CD8-positive, alpha-beta T cell (primary cell): ENCODE measurements at regions of chr3 and their contacts with region 1.

Region 1: GRCh38 chr3:25633919-25634318 is 30.8 kb downstream of the TOP2B start:
- DNase-seq: no peak
- ATAC-seq: no peak
- H3K4me3 ChIP-seq: no peak overlapping the region
- H3K4me3 Mint-ChIP-seq: no peak overlapping the region
- H3K27ac ChIP-seq: no peak overlapping the region
- H3K27ac Mint-ChIP-seq: peak overlapping the region; percentile 62
- H3K4me1 ChIP-seq: no peaks in the 10 kb centered on the region
- H3K4me1 Mint-ChIP-seq: peaks cover 14% of the 10 kb centered on the region
- H3K27me3 ChIP-seq: no peaks in the 10 kb centered on the region
- H3K27me3 Mint-ChIP-seq: no peaks in the 10 kb centered on the region
- CTCF ChIP-seq: no peak

Region 2: GRCh38 chr3:25604107-25604805 is 29.7 kb before region 1 on chr3:
- CTCF ChIA-PET with region 1: no interaction called
- POLR2A ChIA-PET with region 1: no interaction called
- intact Hi-C with region 1: loop called in 1 of 2 experiments (anchors 5 kb)
- DNase-seq: peak in 1 of 9 experiments; percentile 15
- ATAC-seq: no peak
- H3K4me3 ChIP-seq: no peak overlapping the region
- H3K4me3 Mint-ChIP-seq: no peak overlapping the region
- H3K27ac ChIP-seq: no peak overlapping the region
- H3K27ac Mint-ChIP-seq: peak overlapping the region; percentile 32
- H3K4me1 ChIP-seq: no peaks in the 10 kb centered on the region
- H3K4me1 Mint-ChIP-seq: peaks cover 2% of the 10 kb centered on the region
- H3K27me3 ChIP-seq: no peaks in the 10 kb centered on the region
- H3K27me3 Mint-ChIP-seq: no peaks in the 10 kb centered on the region
- CTCF ChIP-seq: no peak

Region 3: DNA sequence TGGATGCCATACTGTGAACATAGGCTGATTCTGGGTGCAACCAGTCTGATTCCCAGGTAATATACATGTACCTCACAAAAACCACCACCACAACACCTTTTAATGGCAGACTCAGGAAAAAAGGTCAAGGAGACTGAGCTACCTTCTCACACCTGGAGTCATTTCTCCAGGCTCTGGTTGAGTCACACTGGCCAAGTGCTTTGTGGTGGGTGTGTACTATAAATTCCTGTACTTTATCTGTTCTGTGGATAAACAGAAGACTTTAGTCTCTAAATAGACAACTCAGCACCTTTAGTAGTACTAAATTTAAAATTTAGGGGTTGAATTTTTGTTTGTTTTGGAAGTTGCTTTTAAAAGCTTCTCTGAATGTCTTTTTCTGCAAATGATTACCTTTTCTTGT is 15.9 kb before region 1 on chr3:
- CTCF ChIA-PET with region 1: no interaction called
- POLR2A ChIA-PET with region 1: no interaction called
- intact Hi-C with region 1: loop called in 1 of 2 experiments (anchors 2 kb)
- DNase-seq: no peak
- ATAC-seq: no peak
- H3K4me3 ChIP-seq: no peak overlapping the region
- H3K4me3 Mint-ChIP-seq: no peak overlapping the region
- H3K27ac ChIP-seq: no peak overlapping the region
- H3K27ac Mint-ChIP-seq: peak overlapping the region; percentile 45
- H3K4me1 ChIP-seq: no peaks in the 10 kb centered on the region
- H3K4me1 Mint-ChIP-seq: peaks cover 2% of the 10 kb centered on the region
- H3K27me3 ChIP-seq: no peaks in the 10 kb centered on the region
- H3K27me3 Mint-ChIP-seq: no peaks in the 10 kb centered on the region
- CTCF ChIP-seq: no peak

Region 4: GRCh38 chr3:25962249-25962648 is 328.3 kb after region 1 on chr3:
- CTCF ChIA-PET with region 1: no interaction called
- POLR2A ChIA-PET with region 1: no interaction called
- intact Hi-C with region 1: no loop called
- DNase-seq: no peak
- ATAC-seq: no peak
- H3K4me3 ChIP-seq: no peak overlapping the region
- H3K4me3 Mint-ChIP-seq: no peak overlapping the region
- H3K27ac ChIP-seq: no peak overlapping the region
- H3K27ac Mint-ChIP-seq: no peak overlapping the region
- H3K4me1 ChIP-seq: no peaks in the 10 kb centered on the region
- H3K4me1 Mint-ChIP-seq: no peaks in the 10 kb centered on the region
- H3K27me3 ChIP-seq: no peaks in the 10 kb centered on the region
- H3K27me3 Mint-ChIP-seq: no peaks in the 10 kb centered on the region
- CTCF ChIP-seq: no peak